Mammary epithelial cell (primary cell): ENCODE measurements at regions of chr20 and their contacts with region 1.

Region 1: GRCh38 chr20:54726768-54727422 is 251.5 kb downstream of the DOK5 start:
- DNase-seq: no peak
- H3K4me3 ChIP-seq: no peak overlapping the region
- H3K27ac ChIP-seq: no peak overlapping the region
- H3K4me1 ChIP-seq: no peaks in the 10 kb centered on the region
- H3K27me3 ChIP-seq: no peaks in the 10 kb centered on the region
- CTCF ChIP-seq: no peak

Region 2: GRCh38 chr20:54804609-54805008 is 77.7 kb after region 1 on chr20:
- CTCF ChIA-PET with region 1: no interaction called
- dilution Hi-C with region 1: loop called (anchors 5 kb)
- in situ Hi-C with region 1: no loop called
- intact Hi-C with region 1: no loop called
- DNase-seq: no peak
- H3K4me3 ChIP-seq: no peak overlapping the region
- H3K27ac ChIP-seq: no peak overlapping the region
- H3K4me1 ChIP-seq: no peaks in the 10 kb centered on the region
- H3K27me3 ChIP-seq: no peaks in the 10 kb centered on the region
- CTCF ChIP-seq: no peak